ENCODE measurements at regions of chr17 and their contacts with region 1.

Region 1: GRCh38 chr17:9512323-9513168 is 63.1 kb downstream of the STX8 start:
- DNase-seq: peak; percentile 67
- H3K4me3 ChIP-seq: no peak overlapping the region
- H3K27ac ChIP-seq: no peak overlapping the region
- H3K4me1 ChIP-seq: peaks cover 12% of the 10 kb centered on the region; the same call in 1 of the 2 replicates
- H3K27me3 ChIP-seq: no peaks in the 10 kb centered on the region

Region 2: GRCh38 chr17:8991514-8992285 is 520.8 kb before region 1 on chr17:
- in situ Hi-C with region 1: loop called (anchors 10 kb)
- DNase-seq: peak; percentile 85
- H3K4me3 ChIP-seq: no peak overlapping the region
- H3K27ac ChIP-seq: no peak overlapping the region
- H3K4me1 ChIP-seq: no peaks in the 10 kb centered on the region
- H3K27me3 ChIP-seq: no peaks in the 10 kb centered on the region

Measured in GM23248 (cell line).